Spleen (tissue), 13 donors: ENCODE measurements at regions of chr2 and their contacts with region 1.

Region 1: GRCh38 chr2:181471783-181472182 is 14.6 kb downstream of the ITGA4 start:
- DNase-seq: no peak
- H3K4me3 ChIP-seq: no peak overlapping the region
- H3K27ac ChIP-seq: peak overlapping the region in 5 of 8 donors; percentile 24 to 46 (median 37)
- H3K4me1 ChIP-seq: peaks cover 20 to 75% (median 58%) of the 10 kb centered on the region in 6 donors
- H3K27me3 ChIP-seq: no peaks in the 10 kb centered on the region
- CTCF ChIP-seq: no peak
- POLR2A ChIP-seq: no peak

Region 2: DNA sequence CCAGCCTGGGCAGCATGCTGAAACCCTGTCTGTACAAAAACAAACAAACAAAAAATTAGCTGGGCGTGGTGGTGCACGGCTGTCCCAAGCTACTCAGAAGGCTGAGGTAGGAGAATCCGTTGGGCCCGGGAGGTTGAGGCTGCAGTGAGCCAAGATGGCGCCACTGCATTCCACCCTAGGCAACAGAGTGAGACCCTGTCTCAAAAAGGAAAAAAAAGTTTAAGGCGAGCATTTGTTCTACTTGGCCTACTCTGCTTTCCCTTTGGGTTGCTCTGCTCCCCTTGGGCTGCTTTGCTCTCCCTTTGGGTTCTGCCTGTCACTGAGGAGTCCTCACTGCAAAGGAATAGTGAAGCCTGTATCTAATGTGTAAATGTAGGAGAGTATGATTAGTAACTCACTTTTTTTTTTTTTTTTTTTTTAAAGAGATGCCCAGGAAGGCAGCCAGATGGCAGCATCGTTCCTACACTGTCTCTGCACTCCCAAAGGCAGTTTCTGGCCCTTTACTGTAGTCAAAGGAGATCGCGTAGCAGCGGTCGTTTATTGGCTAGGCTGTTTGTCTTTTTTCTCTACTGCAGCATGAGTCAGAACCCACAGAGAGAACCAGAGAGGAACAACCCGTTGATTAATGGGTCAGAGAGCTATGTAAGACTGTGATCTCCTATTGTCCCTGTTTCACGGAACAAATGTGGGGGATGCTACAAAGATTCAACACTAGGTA is 1346.4 kb before region 1 on chr2:
- intact Hi-C with region 1: loop called (anchors 10 kb)
- DNase-seq: no peak
- H3K4me3 ChIP-seq: no peak overlapping the region
- H3K27ac ChIP-seq: no peak overlapping the region
- H3K4me1 ChIP-seq: peaks cover 0 to 3% (median 0%) of the 10 kb centered on the region in 6 donors
- H3K27me3 ChIP-seq: peaks cover 0 to 7% (median 0%) of the 10 kb centered on the region in 7 donors
- CTCF ChIP-seq: peak in 5 of 11 experiments; percentile 28 to 42 (median 37)
- POLR2A ChIP-seq: no peak

Region 3: GRCh38 chr2:181104512-181105115 is 367.2 kb before region 1 on chr2:
- intact Hi-C with region 1: loop called (anchors 10 kb)
- DNase-seq: no peak
- H3K4me3 ChIP-seq: no peak overlapping the region
- H3K27ac ChIP-seq: no peak overlapping the region
- H3K4me1 ChIP-seq: peaks cover 0 to 33% (median 12%) of the 10 kb centered on the region in 6 donors
- H3K27me3 ChIP-seq: no peaks in the 10 kb centered on the region
- CTCF ChIP-seq: peak; percentile 33 to 71 (median 61)
- POLR2A ChIP-seq: no peak